OCI-LY7 (cell line): ENCODE measurements at regions of chr9 and their contacts with region 1.

Region 1: GRCh38 chr9:33924978-33925797 is 108.2 kb downstream of the UBE2R2 start:
- DNase-seq: peak; percentile 76
- H3K4me3 ChIP-seq: no peak overlapping the region
- H3K27ac ChIP-seq: peak overlapping the region; percentile 4
- H3K4me1 ChIP-seq: peaks cover 11% of the 10 kb centered on the region
- CTCF ChIP-seq: peak; percentile 92

Region 2: GRCh38 chr9:33623658-33624586 is 301.3 kb before region 1 on chr9:
- CTCF ChIA-PET with region 1: no interaction called
- POLR2A ChIA-PET with region 1: no interaction called
- intact Hi-C with region 1: loop called (anchors 10 kb)
- DNase-seq: peak; percentile 76
- H3K4me3 ChIP-seq: no peak overlapping the region
- H3K27ac ChIP-seq: no peak overlapping the region
- H3K4me1 ChIP-seq: no peaks in the 10 kb centered on the region
- CTCF ChIP-seq: peak; percentile 85

Region 3: DNA sequence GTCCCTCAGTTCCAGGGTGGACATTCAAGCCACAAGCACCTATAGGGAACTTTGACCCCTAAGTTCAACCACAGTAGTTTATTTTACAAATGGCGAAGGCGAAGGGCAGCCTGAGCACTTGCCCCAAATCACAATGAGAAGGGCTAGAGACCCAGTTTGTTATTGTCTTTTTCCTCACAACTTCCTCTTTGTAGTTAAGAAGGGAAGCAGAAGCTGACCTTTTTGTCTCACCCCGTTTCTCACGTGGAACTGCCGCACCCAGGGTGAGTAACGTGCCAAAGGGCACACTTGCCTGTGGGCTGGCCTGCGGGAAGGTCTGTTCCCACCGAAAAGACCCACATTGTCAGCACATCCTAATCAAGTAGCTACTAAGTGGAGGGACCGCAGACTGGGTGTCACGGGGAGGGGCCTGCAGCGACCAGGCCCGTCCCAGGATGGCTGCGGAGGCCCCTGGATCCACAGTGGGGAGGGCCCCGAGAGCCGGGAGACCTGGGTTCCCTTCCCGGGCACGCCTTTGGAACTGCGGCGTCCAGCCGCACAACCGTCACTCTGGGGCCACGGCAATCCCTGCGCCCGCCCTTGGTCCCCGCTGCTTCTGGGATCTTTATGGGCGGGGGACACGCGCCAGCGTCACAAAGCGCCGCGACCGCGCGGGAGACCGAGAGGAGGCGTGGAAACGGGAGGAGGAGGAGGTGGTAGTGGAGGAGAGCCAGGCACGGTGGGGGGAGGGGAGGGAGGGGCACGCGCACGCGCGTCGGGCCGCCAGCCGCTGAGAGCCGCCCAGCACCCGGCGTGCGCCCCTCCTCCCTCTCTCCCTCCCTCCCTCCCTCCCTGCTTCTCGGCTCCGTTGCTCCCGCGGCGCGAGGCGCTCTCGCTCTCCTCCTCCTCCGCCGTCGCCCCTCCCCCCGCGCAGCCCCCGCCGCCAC is 108.6 kb before region 1 on chr9 and contains the start of gene UBE2R2:
- CTCF ChIA-PET with region 1: no interaction called
- POLR2A ChIA-PET with region 1: interaction called, 3 read pairs
- intact Hi-C with region 1: loop called (anchors 1 kb)
- DNase-seq: peak; percentile 90
- H3K4me3 ChIP-seq: peak within 1 kb of the TSS; percentile 99
- H3K27ac ChIP-seq: peak within 1 kb of the TSS; percentile 89
- H3K4me1 ChIP-seq: peaks cover 62% of the 10 kb centered on the region
- CTCF ChIP-seq: no peak
- total RNA-seq, gene UBE2R2: 10.9 and 13.7 TPM in 2 replicates

Region 4: GRCh38 chr9:34233672-34234071 is 308.5 kb after region 1 on chr9:
- CTCF ChIA-PET with region 1: no interaction called
- POLR2A ChIA-PET with region 1: no interaction called
- intact Hi-C with region 1: loop called (anchors 10 kb)
- DNase-seq: no peak
- H3K4me3 ChIP-seq: no peak overlapping the region
- H3K27ac ChIP-seq: no peak overlapping the region
- H3K4me1 ChIP-seq: no peaks in the 10 kb centered on the region
- CTCF ChIP-seq: no peak

Region 5: GRCh38 chr9:34379334-34380033 is 454.3 kb after region 1 on chr9:
- CTCF ChIA-PET with region 1: no interaction called
- POLR2A ChIA-PET with region 1: no interaction called
- intact Hi-C with region 1: loop called (anchors 1 kb)
- DNase-seq: peak; percentile 88
- H3K4me3 ChIP-seq: peak overlapping the region; percentile 61
- H3K27ac ChIP-seq: no peak overlapping the region
- H3K4me1 ChIP-seq: peaks cover 42% of the 10 kb centered on the region
- CTCF ChIP-seq: peak; percentile 98